Gastrocnemius medialis (tissue), 4 donors: ENCODE measurements at regions of chr9 and their contacts with region 1.

Region 1: GRCh38 chr9:30310711-30311110 is 2073.7 kb upstream of the ACO1 start:
- DNase-seq: no peak
- ATAC-seq: no peak
- H3K4me3 ChIP-seq: no peak overlapping the region
- H3K27ac ChIP-seq: no peak overlapping the region
- H3K4me1 ChIP-seq: no peaks in the 10 kb centered on the region
- H3K27me3 ChIP-seq: no peaks in the 10 kb centered on the region
- CTCF ChIP-seq: no peak
- POLR2A ChIP-seq: no peak

Region 2: GRCh38 chr9:30382271-30382670 is 71.6 kb after region 1 on chr9:
- in situ Hi-C with region 1: loop called in 1 of 4 experiments (anchors 10 kb)
- intact Hi-C with region 1: no loop called
- DNase-seq: no peak
- ATAC-seq: no peak
- H3K4me3 ChIP-seq: no peak overlapping the region
- H3K27ac ChIP-seq: no peak overlapping the region
- H3K4me1 ChIP-seq: no peaks in the 10 kb centered on the region
- H3K27me3 ChIP-seq: no peaks in the 10 kb centered on the region
- CTCF ChIP-seq: no peak
- POLR2A ChIP-seq: no peak

Region 3: DNA sequence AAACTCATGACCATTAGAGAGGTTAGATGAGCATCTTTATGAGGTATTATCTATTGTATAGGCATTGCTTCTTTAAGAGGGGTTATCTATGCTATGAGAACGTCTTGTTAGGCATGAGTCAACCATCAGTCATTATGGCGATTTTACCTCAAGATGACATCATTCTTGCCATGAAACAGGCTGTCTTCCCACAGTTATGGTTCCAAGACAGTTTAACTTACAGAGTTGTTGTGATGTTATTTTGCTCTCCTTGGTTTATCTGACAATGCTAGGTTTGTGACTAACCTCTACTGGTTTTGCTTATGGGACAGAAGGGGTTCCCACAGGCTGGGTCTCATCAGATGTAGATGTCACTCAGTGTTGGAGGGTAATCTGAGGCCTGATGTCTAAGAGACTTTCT is 209.0 kb after region 1 on chr9:
- in situ Hi-C with region 1: no loop called
- intact Hi-C with region 1: no loop called
- DNase-seq: no peak
- ATAC-seq: no peak
- H3K4me3 ChIP-seq: no peak overlapping the region
- H3K27ac ChIP-seq: no peak overlapping the region
- H3K4me1 ChIP-seq: no peaks in the 10 kb centered on the region
- H3K27me3 ChIP-seq: no peaks in the 10 kb centered on the region
- CTCF ChIP-seq: no peak
- POLR2A ChIP-seq: no peak